Dorsolateral prefrontal cortex (tissue), 120 donors: ENCODE measurements at regions of chr13 and their contacts with region 1.

Region 1: GRCh38 chr13:32381539-32381938 is 46.4 kb downstream of the N4BP2L1 start:
- DNase-seq: no peak
- H3K4me3 ChIP-seq: no peak overlapping the region
- H3K27ac ChIP-seq: no peak overlapping the region
- H3K27me3 ChIP-seq: no peaks in the 10 kb centered on the region
- CTCF ChIP-seq: peak in 54 of 56 donors; percentile 10 to 77 (median 57)

Region 2: DNA sequence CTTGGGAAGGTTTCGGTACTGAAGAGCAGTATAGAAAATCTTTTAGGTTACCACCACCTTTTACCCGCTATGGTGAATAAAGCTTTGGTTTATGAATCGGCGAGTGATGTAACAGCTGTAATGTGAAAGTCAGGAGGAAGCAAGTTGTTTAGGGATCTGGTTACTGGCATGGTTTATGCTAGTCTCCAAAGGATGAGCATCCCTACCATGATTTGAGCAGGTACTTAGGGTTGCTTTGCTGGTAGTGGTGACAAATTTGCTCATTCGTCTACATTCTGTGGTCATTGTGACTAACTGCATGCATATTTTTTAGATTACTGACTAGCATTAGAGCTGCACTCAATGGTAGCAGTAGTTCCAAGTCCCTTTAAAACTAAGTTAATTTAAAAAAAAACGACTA is 245.9 kb before region 1 on chr13:
- intact Hi-C with region 1: no loop called
- DNase-seq: no peak
- H3K4me3 ChIP-seq: no peak overlapping the region
- H3K27ac ChIP-seq: peak overlapping the region in 2 of 59 donors; percentile 15 to 19
- H3K27me3 ChIP-seq: no peaks in the 10 kb centered on the region
- CTCF ChIP-seq: no peak

Region 3: DNA sequence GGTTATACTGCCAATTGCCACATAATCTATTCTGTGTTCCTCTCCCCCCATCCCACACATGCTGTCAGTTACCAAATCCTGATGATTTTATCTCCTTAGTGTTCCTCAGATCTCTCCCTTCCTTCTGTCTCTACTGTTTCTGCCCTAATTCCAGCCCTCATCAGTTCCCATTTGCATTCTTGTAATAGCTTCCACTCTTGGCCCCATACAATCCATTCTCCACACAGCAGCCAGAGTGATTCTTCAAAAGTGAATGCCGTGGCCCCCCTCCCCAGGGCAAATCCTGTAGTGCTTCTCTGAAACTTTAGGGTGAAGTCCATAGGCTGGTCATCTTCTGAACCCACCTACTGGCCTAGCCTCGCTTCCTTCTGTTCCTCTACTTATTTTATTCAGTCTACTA is 180.8 kb before region 1 on chr13:
- intact Hi-C with region 1: no loop called
- DNase-seq: no peak
- H3K4me3 ChIP-seq: no peak overlapping the region
- H3K27ac ChIP-seq: no peak overlapping the region
- H3K27me3 ChIP-seq: no peaks in the 10 kb centered on the region
- CTCF ChIP-seq: no peak

Region 4: DNA sequence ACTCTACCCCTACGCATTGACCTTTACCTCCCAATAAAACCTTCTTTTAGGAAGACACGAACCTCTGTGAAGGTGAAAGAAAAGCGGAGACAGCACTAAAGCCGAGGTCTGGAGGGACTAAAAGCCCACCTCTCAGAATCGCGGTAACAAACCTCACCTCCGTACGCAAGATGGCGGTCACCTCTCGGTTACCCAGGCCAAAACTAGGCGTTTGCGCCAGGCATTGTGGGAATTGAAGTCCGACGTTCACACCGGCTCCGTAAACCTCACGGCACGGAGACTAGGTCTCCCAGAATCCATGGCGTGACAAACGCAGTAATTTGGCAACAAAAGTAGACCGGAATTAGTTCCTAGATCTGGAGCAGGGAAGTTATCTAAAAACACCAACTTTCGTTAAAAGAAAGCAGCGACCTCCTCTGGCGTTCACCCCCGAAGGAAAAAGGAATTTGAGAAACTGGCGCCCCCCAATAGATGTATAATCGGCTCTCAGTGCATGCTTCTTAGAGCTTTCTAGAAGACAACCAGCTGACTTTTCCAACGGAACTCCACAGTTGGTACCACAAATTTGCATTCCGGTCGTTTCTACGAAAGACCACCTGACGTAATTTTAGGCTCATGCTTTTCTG is 157.2 kb after region 1 on chr13 and contains the start of gene N4BP2L2:
- intact Hi-C with region 1: loop called in 1 of 2 experiments (anchors 1 kb)
- DNase-seq: peak; percentile 91 to 98 (median 94)
- H3K4me3 ChIP-seq: peak within 1 kb of the TSS; percentile 65 to 98 (median 90)
- H3K27ac ChIP-seq: peak within 1 kb of the TSS; percentile 51 to 97 (median 90)
- H3K27me3 ChIP-seq: no peaks in the 10 kb centered on the region
- CTCF ChIP-seq: peak; percentile 41 to 86 (median 70)
- total RNA-seq, gene N4BP2L2: 137 to 249 (median 191) TPM

Region 5: DNA sequence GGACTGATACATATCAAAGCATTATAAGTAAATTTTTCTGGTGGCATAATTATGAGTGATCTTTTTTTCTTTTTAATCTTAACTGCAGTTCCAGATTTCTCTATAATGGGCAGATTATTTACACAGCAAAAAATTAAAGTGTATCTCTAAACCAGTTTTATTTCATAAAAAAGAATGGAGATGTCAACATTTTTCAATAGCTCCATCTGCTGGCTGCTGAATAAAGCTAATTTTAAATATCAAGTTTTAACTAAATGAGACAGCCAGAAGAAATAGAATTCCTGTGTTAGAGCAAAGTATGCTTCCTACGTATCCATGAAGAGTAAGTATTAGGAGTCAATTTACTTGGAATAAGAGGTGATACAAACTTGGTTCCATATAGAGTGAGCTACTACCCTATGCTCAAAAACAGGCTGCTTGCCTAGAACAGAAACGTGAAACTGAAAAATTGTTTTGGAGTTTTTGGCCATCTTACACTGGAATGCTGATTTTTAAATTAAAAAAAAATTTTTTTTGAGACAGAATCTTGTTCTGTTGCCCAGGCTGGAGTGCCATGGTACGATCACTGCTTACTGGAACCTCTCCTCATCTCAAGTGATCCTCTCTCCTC is 199.7 kb after region 1 on chr13:
- intact Hi-C with region 1: loop called (anchors 2 kb)
- DNase-seq: no peak
- H3K4me3 ChIP-seq: no peak overlapping the region
- H3K27ac ChIP-seq: no peak overlapping the region
- H3K27me3 ChIP-seq: no peaks in the 10 kb centered on the region
- CTCF ChIP-seq: peak; percentile 42 to 84 (median 68)

Region 6: GRCh38 chr13:32650705-32651311 is 269.3 kb after region 1 on chr13:
- intact Hi-C with region 1: loop called in 1 of 2 experiments (anchors 10 kb)
- DNase-seq: peak in 3 of 10 donors; percentile 23 to 54 (median 47)
- H3K4me3 ChIP-seq: peak overlapping the region in 1 of 59 donors; percentile 9
- H3K27ac ChIP-seq: peak overlapping the region in 7 of 59 donors; percentile 10 to 52 (median 26)
- H3K27me3 ChIP-seq: no peaks in the 10 kb centered on the region
- CTCF ChIP-seq: peak; percentile 52 to 82 (median 69)

Region 7: DNA sequence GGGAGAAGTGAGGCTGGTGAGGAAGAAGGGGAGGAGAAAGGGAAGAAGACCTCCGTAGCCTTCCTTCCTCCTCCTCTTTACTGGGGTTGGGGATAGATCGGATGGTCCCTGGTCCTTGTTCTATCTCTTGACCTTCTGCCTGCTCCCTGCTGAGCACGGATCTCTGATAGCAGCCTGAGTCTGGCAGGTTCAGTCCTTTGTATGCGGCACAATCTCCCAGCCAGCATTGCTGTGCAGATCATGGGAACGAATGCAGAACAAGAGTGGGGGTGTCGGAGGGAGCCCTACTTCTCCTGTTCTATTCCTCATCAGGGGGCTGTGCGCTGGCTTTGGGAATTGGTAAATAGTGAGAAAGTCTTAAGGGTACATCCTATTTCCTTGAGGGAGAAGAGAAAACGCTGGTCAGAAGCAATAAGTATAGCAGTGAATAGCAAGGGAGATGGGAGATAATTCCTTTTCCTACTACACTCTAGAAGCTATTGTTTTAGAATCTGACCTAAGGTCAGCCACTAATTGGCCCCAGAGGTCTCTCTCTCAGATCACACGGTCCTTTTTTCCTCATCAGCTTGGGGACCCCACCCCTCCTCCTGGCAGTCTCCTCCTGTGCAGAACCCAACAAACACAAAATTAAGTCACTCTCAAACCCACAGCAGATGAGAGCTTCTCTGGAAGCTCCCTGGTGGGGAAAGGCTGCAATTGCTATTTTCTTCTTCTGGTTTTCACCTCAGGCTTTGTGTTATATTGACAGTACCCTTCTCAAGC is 675.7 kb after region 1 on chr13:
- intact Hi-C with region 1: no loop called
- DNase-seq: no peak
- H3K4me3 ChIP-seq: no peak overlapping the region
- H3K27ac ChIP-seq: no peak overlapping the region
- H3K27me3 ChIP-seq: no peaks in the 10 kb centered on the region
- CTCF ChIP-seq: peak in 18 of 56 donors; percentile 6 to 42 (median 17)